ENCODE measurements at regions of chr1 and their contacts with region 1.

Region 1: GRCh38 chr1:21077085-21077484 is 99.6 kb downstream of the EIF4G3 start:
- DNase-seq: peak; percentile 51 to 76 (median 57)
- H3K4me3 ChIP-seq: no peak overlapping the region
- H3K4me3 Mint-ChIP-seq: no peak overlapping the region
- H3K27ac ChIP-seq: peak overlapping the region in 1 of 2 donors; percentile 30
- H3K27ac Mint-ChIP-seq: peak overlapping the region; percentile 40 to 81 (median 65)
- H3K4me1 ChIP-seq: peaks cover 12 to 20% of the 10 kb centered on the region in 2 donors
- H3K4me1 Mint-ChIP-seq: peaks cover 25% of the 10 kb centered on the region
- H3K27me3 ChIP-seq: no peaks in the 10 kb centered on the region
- H3K27me3 Mint-ChIP-seq: no peaks in the 10 kb centered on the region
- CTCF ChIP-seq: no peak

Region 2: DNA sequence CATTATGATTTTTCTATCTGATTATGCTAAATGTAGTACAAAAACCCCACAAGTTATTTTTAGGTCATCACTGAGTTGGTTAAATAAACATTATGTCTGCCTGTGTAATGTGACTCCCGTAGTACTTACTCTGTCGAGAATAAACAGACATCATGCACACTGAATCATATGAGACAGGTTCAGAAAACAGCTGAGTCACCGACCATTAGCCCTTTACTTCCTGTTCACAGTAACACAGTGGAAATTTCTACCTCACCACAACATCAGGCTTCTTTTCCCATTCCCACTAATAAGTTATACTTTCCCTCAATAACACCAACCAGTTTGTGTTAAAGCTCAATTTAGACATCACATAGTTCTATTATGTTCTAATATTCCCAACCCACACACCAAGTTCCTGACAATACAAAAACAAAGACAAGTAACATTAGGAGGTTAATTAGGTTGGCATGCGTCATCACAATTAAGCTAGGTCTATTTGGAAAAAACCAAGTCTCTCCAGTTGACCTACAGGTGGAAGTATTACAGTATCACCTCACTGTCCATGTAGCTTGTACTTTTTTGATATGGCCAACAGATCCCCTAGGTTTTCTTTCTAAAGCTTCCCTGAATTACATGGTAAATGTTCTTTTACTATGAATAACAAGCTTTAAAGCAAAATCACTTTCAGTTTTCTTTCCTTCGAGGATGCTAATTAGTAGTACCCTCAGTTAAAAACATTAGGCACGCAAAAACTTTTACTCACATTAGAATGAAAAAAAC is 54.6 kb before region 1 on chr1:
- intact Hi-C with region 1: loop called in 1 of 2 experiments (anchors 10 kb)
- DNase-seq: peak; percentile 76 to 90 (median 90)
- H3K4me3 ChIP-seq: peak overlapping the region; percentile 24 to 72 (median 56)
- H3K4me3 Mint-ChIP-seq: peak overlapping the region; percentile 65 to 85
- H3K27ac ChIP-seq: peak overlapping the region in 1 of 2 donors; percentile 77
- H3K27ac Mint-ChIP-seq: peak overlapping the region; percentile 86 to 97 (median 93)
- H3K4me1 ChIP-seq: peaks cover 9 to 16% of the 10 kb centered on the region in 2 donors
- H3K4me1 Mint-ChIP-seq: peaks cover 16% of the 10 kb centered on the region
- H3K27me3 ChIP-seq: no peaks in the 10 kb centered on the region
- H3K27me3 Mint-ChIP-seq: no peaks in the 10 kb centered on the region
- CTCF ChIP-seq: no peak

Region 3: DNA sequence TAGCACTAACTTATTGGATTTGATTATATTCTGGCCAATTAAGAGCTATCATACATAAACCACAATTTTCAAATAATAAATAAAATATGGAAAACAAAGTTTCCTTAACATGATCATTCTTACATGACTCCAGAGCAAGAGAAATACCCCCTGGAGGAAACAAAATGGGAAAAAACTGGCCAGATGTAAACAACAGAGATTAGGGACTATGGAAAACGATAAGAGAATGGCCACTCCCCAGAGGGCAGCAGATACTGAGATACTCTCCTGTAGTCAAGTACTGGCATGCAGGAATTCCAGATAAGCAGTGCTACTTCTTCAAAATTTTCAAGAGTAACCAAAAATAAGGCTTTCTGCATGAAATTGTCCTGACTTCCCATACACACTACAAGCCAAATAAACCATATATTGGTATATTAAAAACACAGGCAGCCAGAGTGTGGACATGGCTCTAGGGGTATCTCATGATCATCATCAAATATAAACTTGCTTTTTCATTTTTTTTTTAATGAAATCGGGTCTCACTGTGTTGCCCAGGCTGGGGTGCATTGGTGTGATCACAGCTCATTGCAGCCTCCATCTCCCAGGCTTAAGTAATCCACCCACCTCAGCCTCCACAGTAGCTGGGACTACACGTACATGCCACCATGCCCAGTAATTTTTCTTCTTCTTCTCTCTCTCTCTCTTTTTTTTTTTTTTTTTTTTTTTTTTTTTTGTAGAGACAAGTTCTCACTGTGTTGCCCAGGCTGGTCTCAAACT is 18.9 kb before region 1 on chr1:
- intact Hi-C with region 1: loop called in 1 of 2 experiments (anchors 1 kb)
- DNase-seq: no peak
- H3K4me3 ChIP-seq: no peak overlapping the region
- H3K4me3 Mint-ChIP-seq: no peak overlapping the region
- H3K27ac ChIP-seq: no peak overlapping the region
- H3K27ac Mint-ChIP-seq: no peak overlapping the region
- H3K4me1 ChIP-seq: no peaks in the 10 kb centered on the region
- H3K4me1 Mint-ChIP-seq: peaks cover 11% of the 10 kb centered on the region
- H3K27me3 ChIP-seq: no peaks in the 10 kb centered on the region
- H3K27me3 Mint-ChIP-seq: no peaks in the 10 kb centered on the region
- CTCF ChIP-seq: no peak

Region 4: DNA sequence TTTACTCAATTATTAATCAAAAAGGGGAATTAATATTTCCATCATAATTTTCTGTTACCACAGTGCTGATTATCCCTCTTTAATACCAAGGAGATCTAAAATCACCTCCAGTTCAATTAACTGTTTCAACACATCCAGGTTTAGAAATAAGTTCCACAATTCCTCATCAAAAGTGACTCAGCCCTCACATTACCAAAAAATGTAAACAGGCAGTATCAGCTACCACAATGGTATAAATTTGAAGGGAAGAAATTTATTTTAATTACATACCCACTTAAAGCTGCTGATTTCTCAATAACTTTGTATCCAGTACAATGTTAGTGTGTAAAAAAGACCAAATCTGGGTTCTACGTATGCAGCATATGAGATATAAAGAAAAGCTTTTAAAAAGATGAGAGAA is 47.8 kb after region 1 on chr1:
- intact Hi-C with region 1: loop called in 1 of 2 experiments (anchors 10 kb)
- DNase-seq: peak; percentile 3 to 34 (median 26)
- H3K4me3 ChIP-seq: no peak overlapping the region
- H3K4me3 Mint-ChIP-seq: no peak overlapping the region
- H3K27ac ChIP-seq: no peak overlapping the region
- H3K27ac Mint-ChIP-seq: peak overlapping the region in 3 of 7 donors; percentile 10 to 60 (median 57)
- H3K4me1 ChIP-seq: peaks cover 19 to 25% of the 10 kb centered on the region in 2 donors
- H3K4me1 Mint-ChIP-seq: peaks cover 23% of the 10 kb centered on the region
- H3K27me3 ChIP-seq: no peaks in the 10 kb centered on the region
- H3K27me3 Mint-ChIP-seq: peaks cover 0 to 3% (median 0%) of the 10 kb centered on the region in 3 donors
- CTCF ChIP-seq: no peak

Measured in CD14-positive monocyte (primary cell).